Activated CD8-positive, alpha-beta T cell treated with anti-CD3 and anti-CD28 coated beads for 36 hours (primary cell): ENCODE measurements at regions of chr3 and their contacts with region 1.

Region 1: GRCh38 chr3:113575206-113575605 is 42.9 kb downstream of the SIDT1 start:
- DNase-seq: no peak
- ATAC-seq: no peak
- H3K4me3 Mint-ChIP-seq: no peak overlapping the region
- H3K27ac Mint-ChIP-seq: no peak overlapping the region
- H3K4me1 Mint-ChIP-seq: peaks cover 4% of the 10 kb centered on the region
- H3K27me3 Mint-ChIP-seq: no peaks in the 10 kb centered on the region
- CTCF ChIP-seq: no peak

Region 2: DNA sequence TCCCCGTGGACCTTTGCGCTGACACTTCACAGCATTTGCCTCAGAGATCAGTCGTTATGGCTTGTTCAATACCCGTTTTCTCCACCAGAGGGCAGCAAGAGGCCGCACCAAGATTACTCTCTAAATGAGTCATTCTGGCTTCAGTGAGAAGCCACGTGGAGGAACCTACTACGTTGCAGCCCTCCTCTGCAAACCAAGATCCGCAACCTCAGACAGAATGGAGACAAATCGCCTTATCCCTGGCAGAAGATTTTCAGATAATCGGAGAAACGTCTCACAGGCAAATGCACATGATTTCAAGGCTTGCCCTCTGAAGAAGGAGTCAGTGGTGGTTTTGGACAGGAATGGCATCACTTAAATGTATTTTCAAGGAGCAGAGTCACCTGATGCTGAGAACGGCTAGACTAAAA is 523.9 kb before region 1 on chr3:
- CTCF ChIA-PET with region 1: interaction called, 5 read pairs
- POLR2A ChIA-PET with region 1: no interaction called
- intact Hi-C with region 1: loop called (anchors 10 kb)
- DNase-seq: peak; percentile 93
- ATAC-seq: peak; percentile 99
- H3K4me3 Mint-ChIP-seq: no peak overlapping the region
- H3K27ac Mint-ChIP-seq: no peak overlapping the region
- H3K4me1 Mint-ChIP-seq: peaks cover 2% of the 10 kb centered on the region
- H3K27me3 Mint-ChIP-seq: no peaks in the 10 kb centered on the region
- CTCF ChIP-seq: peak; percentile 91

Region 3: DNA sequence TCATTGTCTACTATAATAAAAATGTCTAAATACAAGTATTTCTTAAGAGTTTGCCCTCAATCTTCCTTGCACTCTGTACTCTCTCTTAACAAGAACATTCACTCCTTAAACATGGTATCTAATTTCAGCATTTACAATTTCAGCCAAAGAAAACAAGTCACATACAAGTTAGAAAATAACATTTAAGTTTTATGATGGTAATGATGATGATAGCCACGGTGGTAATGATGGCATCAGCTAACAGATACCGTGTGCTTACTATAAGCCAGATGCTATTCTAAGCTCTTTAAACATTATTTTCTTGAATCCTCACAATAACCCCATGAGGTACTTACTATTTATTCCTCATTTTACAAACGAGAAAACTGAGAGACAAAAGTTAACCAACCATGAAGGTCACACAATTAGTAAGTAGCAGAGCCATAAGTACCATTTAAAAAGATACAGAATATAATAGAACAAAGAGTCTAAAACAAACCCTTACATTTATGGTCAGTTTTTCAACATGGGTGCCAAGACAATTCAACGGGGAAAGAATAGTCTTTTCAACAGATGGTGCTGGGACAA is 67.6 kb before region 1 on chr3:
- CTCF ChIA-PET with region 1: interaction called, 48 read pairs
- POLR2A ChIA-PET with region 1: no interaction called
- intact Hi-C with region 1: no loop called
- DNase-seq: no peak
- ATAC-seq: no peak
- H3K4me3 Mint-ChIP-seq: no peak overlapping the region
- H3K27ac Mint-ChIP-seq: no peak overlapping the region
- H3K4me1 Mint-ChIP-seq: peaks cover 12% of the 10 kb centered on the region
- H3K27me3 Mint-ChIP-seq: no peaks in the 10 kb centered on the region
- CTCF ChIP-seq: no peak

Region 4: DNA sequence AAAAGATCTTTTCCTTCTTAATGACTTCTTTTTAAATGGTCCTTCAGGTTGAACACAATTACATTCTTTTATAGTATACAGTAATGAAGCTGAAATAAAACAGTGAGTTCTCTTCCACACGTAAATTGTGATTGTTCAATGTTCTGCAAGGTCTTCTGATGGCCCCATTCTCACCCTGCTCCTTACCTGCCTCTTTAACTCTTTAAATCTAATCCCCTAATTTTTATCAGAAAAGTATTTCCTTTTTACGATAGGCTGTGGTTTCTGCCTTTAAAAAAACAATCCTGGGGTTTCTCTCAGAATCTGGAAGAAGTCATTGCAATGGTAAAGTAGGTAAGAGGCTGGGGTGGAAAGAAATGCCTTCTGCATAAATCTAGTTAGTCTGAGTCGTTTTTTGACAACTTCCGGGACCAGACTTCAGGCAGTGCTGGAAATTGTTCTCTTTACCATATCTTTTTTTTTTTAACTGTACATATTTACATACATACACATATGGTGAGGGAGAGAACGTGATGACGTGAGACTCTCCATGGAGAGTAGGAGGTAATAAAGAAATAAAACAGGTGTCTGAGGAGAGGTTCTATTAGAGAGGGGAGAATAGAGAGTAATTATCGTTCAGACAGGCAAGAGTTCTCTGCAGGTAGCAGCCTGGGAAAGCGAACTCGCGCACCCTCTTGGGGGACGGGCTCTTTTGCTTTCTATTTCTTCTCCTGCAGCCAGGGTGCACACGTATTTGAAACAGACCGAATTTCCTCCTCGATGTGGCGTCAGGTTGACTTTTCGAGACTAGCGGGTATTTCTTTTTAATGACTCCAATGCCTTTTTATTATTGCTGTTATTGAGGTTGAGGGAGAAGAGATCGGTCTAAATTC is 43.1 kb before region 1 on chr3 and contains the start of gene SIDT1:
- CTCF ChIA-PET with region 1: interaction called, 14 read pairs
- POLR2A ChIA-PET with region 1: interaction called, 7 read pairs
- intact Hi-C with region 1: no loop called
- DNase-seq: peak; percentile 81
- ATAC-seq: peak; percentile 80
- H3K4me3 Mint-ChIP-seq: peak within 1 kb of the TSS; percentile 97
- H3K27ac Mint-ChIP-seq: peak within 1 kb of the TSS; percentile 98
- H3K4me1 Mint-ChIP-seq: peaks cover 39% of the 10 kb centered on the region
- H3K27me3 Mint-ChIP-seq: no peaks in the 10 kb centered on the region
- CTCF ChIP-seq: no peak
- total RNA-seq, gene SIDT1: 21.0 to 24.0 TPM

Region 5: DNA sequence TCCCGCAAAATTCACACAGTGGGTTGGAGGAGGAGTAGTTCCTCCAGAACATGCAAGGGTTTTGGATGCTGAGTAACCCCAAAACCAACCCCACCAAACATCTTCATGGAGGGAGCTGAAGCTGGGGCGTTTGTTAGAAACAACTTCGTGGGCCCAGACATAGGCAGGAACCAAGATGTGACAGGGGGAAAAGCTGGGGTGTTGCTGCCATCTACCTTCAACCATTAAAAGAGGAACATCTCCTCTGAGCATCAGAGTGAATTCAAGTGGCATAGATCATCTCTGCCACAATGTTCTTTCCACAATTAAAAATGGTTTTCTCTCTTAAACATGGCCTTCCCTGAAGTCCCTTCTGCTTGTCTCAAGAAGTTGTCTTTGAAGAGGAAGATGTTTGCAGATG is 22.4 kb before region 1 on chr3:
- CTCF ChIA-PET with region 1: interaction called, 57 read pairs
- POLR2A ChIA-PET with region 1: no interaction called
- intact Hi-C with region 1: no loop called
- DNase-seq: peak; percentile 27
- ATAC-seq: peak; percentile 60
- H3K4me3 Mint-ChIP-seq: no peak overlapping the region
- H3K27ac Mint-ChIP-seq: no peak overlapping the region
- H3K4me1 Mint-ChIP-seq: peaks cover 42% of the 10 kb centered on the region
- H3K27me3 Mint-ChIP-seq: no peaks in the 10 kb centered on the region
- CTCF ChIP-seq: no peak